Heart left ventricle (tissue), 16 donors: ENCODE measurements at regions of chr19 and their contacts with region 1.

Region 1: GRCh38 chr19:7159105-7159933 is 89.8 kb downstream of the ZNF557 start:
- DNase-seq: peak; percentile 77 to 92 (median 87)
- ATAC-seq: peak; percentile 96 to 98 (median 96)
- H3K4me3 ChIP-seq: peak overlapping the region in 4 of 12 donors; percentile 2 to 34 (median 7)
- H3K27ac ChIP-seq: peak overlapping the region; percentile 59 to 96 (median 88)
- H3K4me1 ChIP-seq: peaks cover 0 to 32% (median 9%) of the 10 kb centered on the region in 12 donors
- H3K27me3 ChIP-seq: no peaks in the 10 kb centered on the region
- CTCF ChIP-seq: no peak
- POLR2A ChIP-seq: peak in 1 of 2 donors; percentile 20

Region 2: GRCh38 chr19:7182489-7182888 is 23.2 kb after region 1 on chr19:
- intact Hi-C with region 1: loop called in 1 of 10 experiments (anchors 2 kb)
- DNase-seq: no peak
- ATAC-seq: peak in 2 of 4 donors; percentile 12 to 64
- H3K4me3 ChIP-seq: peak overlapping the region in 9 of 12 donors; percentile 5 to 30 (median 18)
- H3K27ac ChIP-seq: peak overlapping the region; percentile 74 to 87 (median 82)
- H3K4me1 ChIP-seq: peaks cover 10 to 65% (median 51%) of the 10 kb centered on the region in 12 donors
- H3K27me3 ChIP-seq: no peaks in the 10 kb centered on the region
- CTCF ChIP-seq: no peak
- POLR2A ChIP-seq: no peak

Region 3: GRCh38 chr19:7230826-7231225 is 71.5 kb after region 1 on chr19:
- intact Hi-C with region 1: loop called in 1 of 10 experiments (anchors 1 kb)
- DNase-seq: peak; percentile 65 to 89 (median 71)
- ATAC-seq: peak; percentile 82 to 93 (median 89)
- H3K4me3 ChIP-seq: no peak overlapping the region
- H3K27ac ChIP-seq: peak overlapping the region in 9 of 12 donors; percentile 12 to 70 (median 49)
- H3K4me1 ChIP-seq: peaks cover 0 to 57% (median 36%) of the 10 kb centered on the region in 12 donors
- H3K27me3 ChIP-seq: no peaks in the 10 kb centered on the region
- CTCF ChIP-seq: no peak
- POLR2A ChIP-seq: no peak

Region 4: DNA sequence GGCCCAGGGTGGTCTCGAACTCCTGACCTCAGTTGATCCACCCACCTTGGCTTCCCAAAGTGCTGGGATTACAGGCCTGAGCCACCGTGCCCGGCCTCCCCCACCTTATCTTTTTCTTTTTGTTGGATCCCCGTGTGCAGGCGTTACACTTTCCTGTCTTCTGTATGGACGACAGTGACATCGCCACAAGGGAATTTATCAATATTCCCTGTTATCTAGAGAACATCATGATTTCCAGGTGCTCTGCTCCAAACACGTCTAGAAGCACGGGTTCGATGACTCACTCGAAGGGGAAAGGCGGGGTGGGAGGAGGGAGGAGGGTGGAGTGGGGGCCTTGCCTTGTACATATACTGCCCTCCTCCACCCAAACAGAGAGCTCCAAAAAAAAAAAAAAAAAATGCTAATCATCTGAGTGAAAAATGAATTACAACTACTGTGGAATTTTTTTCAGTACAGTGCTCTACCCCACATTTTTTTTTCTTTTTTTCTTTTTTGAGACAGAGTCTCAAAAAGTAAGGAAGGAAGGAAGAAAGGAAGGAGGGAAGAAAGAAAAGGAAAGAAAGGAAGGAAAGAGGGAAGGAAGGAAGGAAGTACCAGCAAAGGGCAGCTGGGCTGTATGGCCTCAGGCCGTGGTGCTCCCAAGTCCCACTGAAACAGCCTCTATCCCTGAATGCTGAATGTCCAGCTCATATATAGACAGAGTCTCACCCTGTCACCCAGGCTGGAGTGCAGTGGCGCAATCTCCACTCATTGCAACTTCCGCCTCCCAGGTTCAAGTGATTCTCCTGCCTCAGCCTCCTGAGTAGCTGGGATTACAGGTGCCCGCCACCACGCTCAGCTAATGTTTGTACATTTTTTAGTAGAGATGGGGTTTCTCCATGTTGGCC is 98.1 kb after region 1 on chr19:
- intact Hi-C with region 1: no loop called
- DNase-seq: peak in 1 of 5 donors; percentile 54
- ATAC-seq: peak in 3 of 4 donors; percentile 61 to 76 (median 62)
- H3K4me3 ChIP-seq: no peak overlapping the region
- H3K27ac ChIP-seq: peak overlapping the region in 8 of 12 donors; percentile 10 to 70 (median 30)
- H3K4me1 ChIP-seq: peaks cover 0 to 64% (median 33%) of the 10 kb centered on the region in 12 donors
- H3K27me3 ChIP-seq: no peaks in the 10 kb centered on the region
- CTCF ChIP-seq: no peak
- POLR2A ChIP-seq: no peak